ENCODE measurements at regions of chr7 and their contacts with region 1.

Region 1: DNA sequence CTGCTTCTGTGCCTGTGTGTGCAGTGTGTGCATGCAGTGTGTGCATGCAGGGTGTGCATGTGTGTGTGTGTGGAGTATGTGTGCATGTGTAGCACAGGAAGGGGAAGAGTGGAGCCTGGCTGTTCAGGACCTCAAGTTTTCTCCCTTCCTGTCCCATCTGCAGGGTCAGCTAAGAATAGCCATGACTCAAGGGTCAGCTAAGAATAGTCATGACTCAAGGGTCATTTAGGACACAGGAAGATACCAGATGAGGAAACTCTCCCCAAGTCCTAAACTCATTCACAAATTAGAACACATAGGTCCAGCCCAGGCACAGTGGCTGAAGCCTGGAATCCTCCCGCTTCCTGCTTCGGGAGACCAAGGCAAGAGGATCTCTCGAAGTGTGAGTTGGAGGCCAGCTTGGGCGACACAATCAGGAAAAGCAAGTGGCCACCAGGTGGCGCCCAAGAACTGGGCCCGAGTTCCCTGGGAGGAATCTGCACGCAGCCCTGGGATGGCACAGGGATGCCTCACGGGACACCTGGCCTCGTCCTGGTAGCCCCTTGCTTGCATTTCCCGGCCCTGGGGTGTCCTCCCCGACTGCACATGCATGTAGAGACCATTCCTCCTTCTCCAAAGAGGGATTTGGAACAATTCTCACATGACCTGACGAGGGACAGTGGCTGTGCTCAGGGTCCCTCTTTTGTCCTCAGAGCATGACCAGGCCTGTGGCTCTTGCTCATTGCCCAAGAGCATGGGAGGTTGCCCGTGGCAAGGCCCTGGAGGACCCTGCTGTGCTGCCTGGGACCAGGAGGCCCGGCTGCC is 21.4 kb upstream of the VOPP1 start:
- DNase-seq: peak; percentile 84
- H3K4me3 Mint-ChIP-seq: no peak overlapping the region
- H3K27ac Mint-ChIP-seq: no peak overlapping the region
- H3K4me1 Mint-ChIP-seq: peaks cover 11% of the 10 kb centered on the region
- H3K27me3 Mint-ChIP-seq: peaks cover 2% of the 10 kb centered on the region

Region 2: GRCh38 chr7:55432939-55433784 is 160.6 kb before region 1 on chr7:
- CTCF ChIA-PET with region 1: interaction called, 7 read pairs
- POLR2A ChIA-PET with region 1: no interaction called
- intact Hi-C with region 1: loop called (anchors 1 kb)
- DNase-seq: peak; percentile 32
- H3K4me3 Mint-ChIP-seq: no peak overlapping the region
- H3K27ac Mint-ChIP-seq: no peak overlapping the region
- H3K4me1 Mint-ChIP-seq: peaks cover 28% of the 10 kb centered on the region
- H3K27me3 Mint-ChIP-seq: no peaks in the 10 kb centered on the region

Region 3: DNA sequence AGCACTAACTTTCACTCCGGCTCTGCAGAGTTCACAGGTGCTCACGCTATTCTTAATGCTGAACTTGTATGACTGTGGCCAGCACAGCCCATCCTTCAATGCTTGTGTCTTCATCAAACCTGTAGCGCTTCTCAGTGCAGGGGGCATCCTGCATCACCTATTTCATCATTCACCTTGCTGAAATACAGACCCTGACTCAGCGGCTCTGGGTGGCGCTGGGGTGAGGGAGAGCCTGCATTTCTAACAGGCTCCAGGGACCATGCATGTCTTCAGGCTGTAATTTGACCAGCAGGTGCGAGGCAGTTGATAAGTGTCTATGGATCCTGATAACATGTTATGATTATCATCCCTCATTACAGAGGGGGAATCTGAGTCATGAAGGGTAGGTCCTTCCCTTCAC is 110.7 kb before region 1 on chr7:
- CTCF ChIA-PET with region 1: interaction called, 10 read pairs
- POLR2A ChIA-PET with region 1: no interaction called
- intact Hi-C with region 1: no loop called
- DNase-seq: peak; percentile 9
- H3K4me3 Mint-ChIP-seq: no peak overlapping the region
- H3K27ac Mint-ChIP-seq: peak overlapping the region; percentile 52
- H3K4me1 Mint-ChIP-seq: peaks cover 82% of the 10 kb centered on the region
- H3K27me3 Mint-ChIP-seq: no peaks in the 10 kb centered on the region

Measured in activated CD4-positive, alpha-beta memory T cell treated with anti-CD3 and anti-CD28 coated beads for 36 hours (primary cell).